Activated CD8-positive, alpha-beta memory T cell treated with anti-CD3 and anti-CD28 coated beads, Interleukin-2, amount 10 ng/mL, durations not matched to agents 7 days and 5 days (primary cell): ENCODE measurements at regions of chr6 and their contacts with region 1.

Region 1: GRCh38 chr6:112043032-112044007 is 10.6 kb upstream of the CCN6 start:
- DNase-seq: peak; percentile 96
- ATAC-seq: peak; percentile 98
- H3K4me3 Mint-ChIP-seq: peak overlapping the region; percentile 93
- H3K27ac Mint-ChIP-seq: peak overlapping the region; percentile 98
- H3K4me1 Mint-ChIP-seq: peaks cover 17% of the 10 kb centered on the region
- H3K27me3 Mint-ChIP-seq: no peaks in the 10 kb centered on the region

Region 2: DNA sequence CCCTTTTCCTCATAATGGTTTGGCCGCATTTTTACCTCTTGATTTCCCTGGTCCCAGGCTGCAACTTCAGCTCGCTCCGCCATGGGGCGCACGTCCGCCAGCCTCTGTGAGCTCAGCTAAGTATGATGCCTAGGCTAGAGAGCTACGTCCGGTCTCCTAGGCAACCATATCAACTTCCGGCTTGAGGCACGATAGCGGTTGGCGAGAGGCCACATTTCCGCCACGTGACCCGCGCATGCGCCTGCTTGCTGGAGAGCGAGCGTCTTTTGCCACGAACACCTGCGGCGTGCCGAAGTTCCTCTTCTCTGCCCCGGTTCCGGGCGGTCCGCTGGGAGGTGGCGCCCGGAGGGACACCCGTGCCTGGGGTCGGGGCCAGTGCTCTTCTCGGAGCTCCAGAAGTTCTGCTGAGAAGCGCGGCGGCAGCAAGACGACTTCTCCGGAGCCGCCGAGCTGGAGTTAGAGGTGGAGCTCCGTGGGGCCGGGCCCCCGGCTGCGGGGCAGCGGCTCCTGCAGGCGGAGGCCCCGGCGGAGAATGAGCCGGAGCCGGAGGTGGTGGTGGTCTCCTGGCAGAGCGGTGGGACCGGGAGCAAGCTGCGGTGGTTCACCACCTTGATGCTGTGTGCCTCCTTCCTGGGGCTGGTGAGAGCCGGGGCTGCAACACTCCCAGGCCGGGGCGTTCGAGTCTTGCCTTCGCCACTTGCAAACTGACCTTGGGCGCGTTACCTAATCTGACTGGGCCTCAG is 784.1 kb before region 1 on chr6:
- CTCF ChIA-PET with region 1: interaction called, 37 read pairs
- DNase-seq: peak; percentile 99
- ATAC-seq: peak; percentile 95
- H3K4me3 Mint-ChIP-seq: peak overlapping the region; percentile 77
- H3K27ac Mint-ChIP-seq: peak overlapping the region; percentile 88
- H3K4me1 Mint-ChIP-seq: peaks cover 35% of the 10 kb centered on the region
- H3K27me3 Mint-ChIP-seq: peaks cover 18% of the 10 kb centered on the region

Region 3: GRCh38 chr6:111709615-111710398 is 333.5 kb before region 1 on chr6:
- CTCF ChIA-PET with region 1: interaction called, 39 read pairs
- DNase-seq: peak; percentile 70
- ATAC-seq: peak; percentile 82
- H3K4me3 Mint-ChIP-seq: no peak overlapping the region
- H3K27ac Mint-ChIP-seq: peak overlapping the region; percentile 73
- H3K4me1 Mint-ChIP-seq: peaks cover 47% of the 10 kb centered on the region
- H3K27me3 Mint-ChIP-seq: no peaks in the 10 kb centered on the region

Region 4: DNA sequence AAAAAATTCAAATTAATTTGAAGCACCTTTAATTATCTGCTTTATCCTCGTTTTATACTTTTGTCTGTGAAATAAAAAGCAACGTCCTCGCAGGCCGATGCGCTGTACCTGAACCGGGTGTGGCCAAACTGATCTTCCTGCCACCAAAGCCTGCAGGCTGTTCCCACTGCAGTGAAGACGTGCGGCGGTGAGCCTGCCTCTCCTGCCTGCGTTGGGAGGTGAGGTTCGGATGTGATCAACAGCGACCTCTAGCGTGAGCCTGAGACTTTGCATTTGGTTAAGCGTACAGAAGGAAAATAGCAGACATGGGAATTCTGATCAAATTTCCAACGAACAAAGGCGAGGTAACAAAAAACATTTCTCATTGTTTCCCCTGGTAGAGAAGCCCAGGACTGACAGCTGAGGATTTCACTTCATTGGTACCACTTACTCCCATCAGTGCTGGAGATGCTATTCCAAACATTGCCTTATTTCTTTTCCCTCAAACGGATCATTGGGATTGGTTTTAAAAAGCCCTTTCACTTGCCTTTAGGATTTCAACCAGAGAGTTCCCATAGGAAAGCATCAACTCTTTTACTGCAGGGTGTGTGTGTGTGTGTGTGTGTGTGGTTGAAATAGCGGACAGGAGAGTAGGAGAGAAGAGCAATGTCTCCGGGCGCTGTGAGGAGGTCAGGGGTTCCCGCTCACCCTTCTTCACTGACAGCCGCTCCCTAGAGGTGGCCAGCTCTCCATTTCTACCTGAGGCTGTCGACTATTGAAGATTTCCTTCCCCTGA is 46.1 kb before region 1 on chr6:
- CTCF ChIA-PET with region 1: interaction called, 10 read pairs
- DNase-seq: peak; percentile 87
- ATAC-seq: peak; percentile 89
- H3K4me3 Mint-ChIP-seq: peak overlapping the region; percentile 34
- H3K27ac Mint-ChIP-seq: peak overlapping the region; percentile 41
- H3K4me1 Mint-ChIP-seq: peaks cover 41% of the 10 kb centered on the region
- H3K27me3 Mint-ChIP-seq: no peaks in the 10 kb centered on the region

Region 5: DNA sequence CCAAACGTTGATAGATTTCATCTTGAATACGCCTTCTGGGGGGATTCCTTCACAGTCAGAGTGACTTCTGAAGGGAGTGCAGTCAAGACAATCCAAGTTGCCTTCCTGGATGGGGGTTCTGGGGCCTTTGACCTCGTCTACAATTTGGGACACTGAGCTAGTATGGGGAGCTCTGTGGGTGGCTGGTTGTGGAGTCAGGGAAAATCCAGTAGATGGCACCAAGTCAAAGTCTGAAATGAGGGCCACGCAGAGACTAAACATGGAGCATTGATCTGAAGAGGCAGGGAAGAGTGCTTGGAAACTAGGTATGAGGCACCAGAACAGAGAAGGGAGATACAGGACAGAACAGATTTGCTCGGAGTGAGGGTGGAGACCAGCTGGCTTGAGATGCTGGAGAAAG is 33.0 kb before region 1 on chr6:
- CTCF ChIA-PET with region 1: interaction called, 29 read pairs
- DNase-seq: no peak
- ATAC-seq: peak; percentile 39
- H3K4me3 Mint-ChIP-seq: no peak overlapping the region
- H3K27ac Mint-ChIP-seq: no peak overlapping the region
- H3K4me1 Mint-ChIP-seq: no peaks in the 10 kb centered on the region
- H3K27me3 Mint-ChIP-seq: no peaks in the 10 kb centered on the region

Region 6: DNA sequence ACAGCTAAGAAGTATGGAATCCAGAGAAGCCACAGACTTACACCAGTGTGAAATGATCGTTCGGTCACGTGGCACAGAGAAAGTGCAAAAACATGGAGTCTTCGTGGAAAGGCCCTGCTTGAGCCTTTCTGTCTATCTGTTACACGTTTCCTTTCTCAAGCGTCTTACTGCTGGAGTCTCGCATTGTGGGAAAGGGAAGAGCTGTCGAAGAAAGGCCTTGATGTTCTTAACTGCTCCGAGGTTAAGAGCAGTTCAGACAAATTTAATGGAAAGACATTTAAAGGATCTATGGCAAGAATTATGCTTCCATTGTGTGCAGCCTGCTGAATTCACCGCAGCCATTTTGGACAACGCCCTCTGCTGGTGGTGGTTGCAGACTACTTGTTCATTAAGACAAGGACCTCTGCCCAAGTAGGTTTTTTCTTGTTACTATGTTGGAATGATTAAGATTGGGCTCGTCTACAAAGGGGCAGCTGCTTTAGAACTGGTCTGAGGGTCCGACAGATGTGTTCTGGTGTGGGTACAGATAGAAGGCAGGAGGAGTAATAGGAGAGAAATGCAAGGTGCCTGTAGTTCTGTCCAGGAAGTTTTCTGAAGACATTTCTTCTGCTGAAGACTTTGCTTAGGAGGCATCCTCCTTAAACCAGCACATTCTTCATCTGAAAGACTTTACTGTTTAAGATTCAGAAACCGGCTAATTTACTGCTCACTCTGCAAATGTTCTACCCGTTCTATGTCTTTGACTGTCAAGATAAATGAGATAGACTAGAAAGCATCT is 14.1 kb before region 1 on chr6:
- CTCF ChIA-PET with region 1: interaction called, 77 read pairs
- DNase-seq: peak; percentile 81
- ATAC-seq: no peak
- H3K4me3 Mint-ChIP-seq: no peak overlapping the region
- H3K27ac Mint-ChIP-seq: peak overlapping the region; percentile 48
- H3K4me1 Mint-ChIP-seq: peaks cover 33% of the 10 kb centered on the region
- H3K27me3 Mint-ChIP-seq: peaks cover 4% of the 10 kb centered on the region

Region 7: DNA sequence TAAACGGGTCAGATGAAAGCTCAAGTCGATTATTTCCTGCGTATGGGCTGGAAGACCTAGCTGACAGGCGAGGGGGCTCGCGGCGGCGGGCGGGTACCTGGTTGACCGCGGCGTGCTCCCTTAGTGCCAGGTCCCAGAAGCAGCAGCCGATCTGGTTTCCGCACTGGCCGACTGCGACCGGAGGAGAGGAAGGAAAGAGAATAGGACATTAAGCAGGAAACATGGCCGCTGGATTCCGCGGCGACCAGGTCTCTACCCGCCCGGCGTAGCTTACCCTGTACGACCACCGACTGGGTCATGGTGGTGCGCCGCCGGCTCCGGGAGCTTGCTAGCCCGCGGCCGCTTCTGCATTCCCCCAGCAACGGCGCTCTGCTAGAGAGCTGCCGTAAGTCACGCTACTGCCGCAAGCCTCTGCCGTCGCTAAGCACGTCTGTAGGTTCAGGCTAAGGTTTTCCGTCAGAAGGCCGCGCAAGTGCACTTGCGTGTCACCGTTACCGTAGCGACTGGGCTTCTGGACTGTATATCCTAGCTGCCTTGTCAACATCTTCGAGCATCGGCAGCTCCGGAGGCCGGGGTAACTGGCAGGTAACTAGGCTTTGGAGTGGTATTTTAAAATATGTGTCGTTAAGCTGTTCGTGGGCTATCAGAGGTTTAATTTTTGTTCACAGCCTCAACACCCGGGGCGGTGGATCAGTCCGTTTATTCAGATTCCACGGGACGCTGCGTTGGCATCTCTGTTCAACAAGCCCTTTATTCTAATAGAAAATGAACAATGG is 44.0 kb after region 1 on chr6 and contains the starts of genes FAM229B and TUBE1:
- CTCF ChIA-PET with region 1: interaction called, 11 read pairs
- DNase-seq: peak; percentile 96
- ATAC-seq: peak; percentile 95
- H3K4me3 Mint-ChIP-seq: no peak within 1 kb of the TSS
- H3K27ac Mint-ChIP-seq: no peak within 1 kb of the TSS
- H3K4me1 Mint-ChIP-seq: peaks cover 7% of the 10 kb centered on the region
- H3K27me3 Mint-ChIP-seq: peaks cover 30% of the 10 kb centered on the region
- total RNA-seq, gene FAM229B: 4.1 to 4.5 TPM
- total RNA-seq, gene TUBE1: 20.7 to 28.7 TPM

Region 8: DNA sequence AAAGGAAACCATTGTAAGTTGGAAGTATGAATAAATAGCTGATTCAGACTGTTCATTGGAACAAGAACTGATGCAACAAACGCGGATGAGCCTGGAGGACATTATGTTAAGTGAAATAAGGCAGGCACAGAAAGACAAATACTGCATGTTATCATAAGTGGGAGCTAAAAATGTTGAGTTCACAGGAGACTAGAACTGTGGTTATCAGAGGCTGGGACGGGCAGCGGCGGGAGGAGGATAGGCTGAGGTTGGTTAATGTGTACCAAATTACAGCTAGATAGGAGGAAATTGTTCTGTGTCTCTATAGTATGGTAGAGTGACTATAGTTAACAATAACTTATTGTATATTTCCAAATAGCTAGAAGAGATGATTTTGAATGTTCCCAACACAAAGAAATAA is 84.9 kb after region 1 on chr6:
- CTCF ChIA-PET with region 1: no interaction called
- DNase-seq: no peak
- ATAC-seq: no peak
- H3K4me3 Mint-ChIP-seq: no peak overlapping the region
- H3K27ac Mint-ChIP-seq: no peak overlapping the region
- H3K4me1 Mint-ChIP-seq: no peaks in the 10 kb centered on the region
- H3K27me3 Mint-ChIP-seq: peaks cover 40% of the 10 kb centered on the region

Region 9: GRCh38 chr6:112153926-112154607 is 110.7 kb after region 1 on chr6:
- CTCF ChIA-PET with region 1: no interaction called
- DNase-seq: no peak
- ATAC-seq: no peak
- H3K4me3 Mint-ChIP-seq: no peak overlapping the region
- H3K27ac Mint-ChIP-seq: no peak overlapping the region
- H3K4me1 Mint-ChIP-seq: peaks cover 19% of the 10 kb centered on the region
- H3K27me3 Mint-ChIP-seq: peaks cover 38% of the 10 kb centered on the region